ENCODE measurements at regions of chr2 and their contacts with region 1.

Region 1: GRCh38 chr2:100818606-100819369 is 1.2 kb upstream of the NPAS2 start:
- DNase-seq: no peak
- H3K4me3 ChIP-seq: peak overlapping the region; percentile 79 to 83 (median 81)
- H3K27ac ChIP-seq: peak overlapping the region; percentile 91 to 97 (median 96)
- H3K4me1 ChIP-seq: peaks cover 32 to 66% (median 61%) of the 10 kb centered on the region in 4 donors
- H3K27me3 ChIP-seq: peaks cover 0 to 9% (median 0%) of the 10 kb centered on the region in 4 donors
- CTCF ChIP-seq: peak in 1 of 3 experiments; percentile 5
- EP300 ChIP-seq: peak; percentile 61
- POLR2A ChIP-seq: no peak

Region 2: GRCh38 chr2:100730346-100730745 is 88.4 kb before region 1 on chr2:
- intact Hi-C with region 1: loop called (anchors 5 kb)
- DNase-seq: no peak
- H3K4me3 ChIP-seq: no peak overlapping the region
- H3K27ac ChIP-seq: no peak overlapping the region
- H3K4me1 ChIP-seq: peaks cover 10 to 11% (median 10%) of the 10 kb centered on the region in 4 donors
- H3K27me3 ChIP-seq: no peaks in the 10 kb centered on the region
- CTCF ChIP-seq: peak; percentile 55 to 64 (median 62)
- EP300 ChIP-seq: no peak
- POLR2A ChIP-seq: no peak

Region 3: GRCh38 chr2:100742277-100743254 is 76.2 kb before region 1 on chr2:
- intact Hi-C with region 1: loop called (anchors 5 kb)
- DNase-seq: peak; percentile 91
- H3K4me3 ChIP-seq: no peak overlapping the region
- H3K27ac ChIP-seq: peak overlapping the region; percentile 54 to 67 (median 60)
- H3K4me1 ChIP-seq: peaks cover 0 to 20% (median 16%) of the 10 kb centered on the region in 4 donors
- H3K27me3 ChIP-seq: no peaks in the 10 kb centered on the region
- CTCF ChIP-seq: no peak
- EP300 ChIP-seq: no peak
- POLR2A ChIP-seq: no peak

Region 4: DNA sequence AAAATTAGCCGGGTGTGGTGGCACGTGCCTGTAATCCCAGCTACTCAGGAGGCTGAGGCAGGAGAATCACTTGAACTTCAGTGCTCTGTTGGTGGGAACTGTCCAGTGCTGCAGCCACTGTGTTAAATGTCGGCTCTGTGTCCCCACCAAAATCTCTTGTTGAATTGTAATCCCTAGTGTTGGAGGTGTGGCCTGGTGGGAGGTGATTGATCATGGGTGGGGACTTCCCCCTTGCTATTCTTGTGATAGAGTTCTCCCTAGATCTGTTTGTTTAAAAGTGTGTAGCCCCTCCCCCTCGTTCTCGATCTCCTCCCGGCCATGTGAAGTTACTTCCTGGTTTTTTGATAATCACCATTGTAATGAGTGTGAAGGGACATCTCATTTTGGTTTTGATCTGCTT is 173.5 kb after region 1 on chr2:
- intact Hi-C with region 1: loop called (anchors 5 kb)
- DNase-seq: no peak
- H3K4me3 ChIP-seq: no peak overlapping the region
- H3K27ac ChIP-seq: no peak overlapping the region
- H3K4me1 ChIP-seq: no peaks in the 10 kb centered on the region
- H3K27me3 ChIP-seq: no peaks in the 10 kb centered on the region
- CTCF ChIP-seq: no peak
- EP300 ChIP-seq: no peak
- POLR2A ChIP-seq: no peak

Measured in esophagus muscularis mucosa (tissue), 4 donors.